ENCODE measurements at regions of chr11 and their contacts with region 1.

Region 1: DNA sequence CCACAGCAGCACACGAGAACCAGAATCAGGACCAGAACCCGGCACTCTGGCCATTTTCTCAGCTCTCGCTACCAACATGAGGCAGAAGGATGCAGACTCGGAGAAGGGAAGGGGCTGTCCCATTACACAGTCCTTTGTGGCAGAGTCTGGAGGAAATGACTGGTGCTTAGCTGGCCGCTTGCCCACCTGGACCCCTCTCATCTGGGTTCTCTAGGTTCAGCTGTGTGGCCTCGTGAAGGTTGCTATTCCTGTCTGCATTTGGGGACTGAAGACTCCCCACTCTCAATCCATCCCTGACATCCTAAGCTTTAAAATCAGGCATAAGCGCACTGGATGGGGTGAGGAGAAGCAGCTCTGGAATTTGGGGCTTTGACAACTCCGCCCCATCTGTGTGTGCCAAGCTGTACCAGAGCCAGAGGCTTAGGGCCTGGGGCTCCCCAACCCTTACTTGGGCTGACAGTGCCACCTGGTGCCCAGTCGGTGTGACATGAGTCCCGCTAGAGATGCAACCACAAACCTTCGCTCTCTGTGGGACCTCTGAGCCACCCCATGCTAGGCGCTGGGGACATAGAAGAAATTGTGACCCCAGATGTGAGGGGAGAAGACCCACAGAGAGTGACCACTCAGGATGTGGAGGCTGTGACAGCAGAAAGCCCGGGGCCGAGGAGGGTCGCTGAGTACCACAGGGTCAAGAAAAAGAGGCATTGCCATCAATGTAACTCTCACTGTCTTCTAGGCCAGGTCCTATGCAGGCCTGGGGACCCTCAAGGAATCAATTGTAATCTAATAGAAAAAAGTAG is 35.9 kb upstream of the FCHSD2 start:
- DNase-seq: peak; percentile 72
- ATAC-seq: peak; percentile 94
- H3K4me3 Mint-ChIP-seq: no peak overlapping the region
- H3K27ac Mint-ChIP-seq: peak overlapping the region; percentile 87
- H3K4me1 Mint-ChIP-seq: peaks cover 42% of the 10 kb centered on the region
- H3K27me3 Mint-ChIP-seq: no peaks in the 10 kb centered on the region
- CTCF ChIP-seq: peak; percentile 43

Region 2: GRCh38 chr11:72831513-72832300 is 346.3 kb before region 1 on chr11:
- CTCF ChIA-PET with region 1: interaction called, 75 read pairs
- POLR2A ChIA-PET with region 1: interaction called, 6 read pairs
- intact Hi-C with region 1: loop called (anchors 1 kb)
- DNase-seq: no peak
- ATAC-seq: peak; percentile 65
- H3K4me3 Mint-ChIP-seq: no peak overlapping the region
- H3K27ac Mint-ChIP-seq: peak overlapping the region; percentile 80
- H3K4me1 Mint-ChIP-seq: peaks cover 24% of the 10 kb centered on the region
- H3K27me3 Mint-ChIP-seq: no peaks in the 10 kb centered on the region
- CTCF ChIP-seq: peak; percentile 30

Region 3: DNA sequence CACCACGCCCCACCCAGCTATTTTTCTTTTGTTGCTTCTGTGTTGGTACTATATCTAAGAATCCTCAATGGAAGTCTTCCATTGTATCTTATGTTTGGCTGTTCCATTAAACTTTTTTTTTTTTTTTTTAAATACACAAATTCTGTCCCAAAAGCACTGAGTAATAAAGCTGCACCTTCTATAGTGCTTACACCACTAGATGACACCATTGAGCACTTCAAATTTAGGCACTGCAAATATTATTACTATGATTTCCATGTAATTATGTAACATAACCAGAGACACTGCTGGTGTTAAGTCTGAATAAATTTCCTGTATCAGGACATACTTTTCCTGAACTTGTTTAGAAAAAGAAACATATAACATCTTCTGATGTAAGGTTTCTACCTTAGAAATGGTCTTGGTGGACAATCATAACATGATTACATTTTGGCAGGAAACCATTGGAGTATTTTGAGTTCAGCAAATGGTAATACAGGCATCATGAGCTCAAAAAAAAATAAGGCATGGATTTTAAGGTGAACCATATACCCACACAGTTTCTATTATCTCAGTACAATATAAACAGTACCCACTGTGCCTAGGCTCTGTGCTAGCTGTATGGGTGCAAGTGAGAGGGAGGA is 253.3 kb before region 1 on chr11:
- CTCF ChIA-PET with region 1: interaction called, 130 read pairs
- POLR2A ChIA-PET with region 1: interaction called, 5 read pairs
- intact Hi-C with region 1: loop called (anchors 1 kb)
- DNase-seq: no peak
- ATAC-seq: peak; percentile 54
- H3K4me3 Mint-ChIP-seq: no peak overlapping the region
- H3K27ac Mint-ChIP-seq: peak overlapping the region; percentile 71
- H3K4me1 Mint-ChIP-seq: peaks cover 32% of the 10 kb centered on the region
- H3K27me3 Mint-ChIP-seq: no peaks in the 10 kb centered on the region
- CTCF ChIP-seq: no peak

Region 4: GRCh38 chr11:73085189-73085875 is 92.6 kb before region 1 on chr11:
- CTCF ChIA-PET with region 1: interaction called, 3 read pairs
- POLR2A ChIA-PET with region 1: no interaction called
- intact Hi-C with region 1: loop called (anchors 5 kb)
- DNase-seq: no peak
- ATAC-seq: no peak
- H3K4me3 Mint-ChIP-seq: peak overlapping the region; percentile 48
- H3K27ac Mint-ChIP-seq: peak overlapping the region; percentile 83
- H3K4me1 Mint-ChIP-seq: peaks cover 49% of the 10 kb centered on the region
- H3K27me3 Mint-ChIP-seq: no peaks in the 10 kb centered on the region
- CTCF ChIP-seq: no peak

Region 5: GRCh38 chr11:73157053-73158010 is 20.6 kb before region 1 on chr11:
- CTCF ChIA-PET with region 1: interaction called, 57 read pairs
- POLR2A ChIA-PET with region 1: interaction called, 56 read pairs
- intact Hi-C with region 1: loop called (anchors 1 kb)
- DNase-seq: peak; percentile 51
- ATAC-seq: peak; percentile 51
- H3K4me3 Mint-ChIP-seq: peak overlapping the region; percentile 78
- H3K27ac Mint-ChIP-seq: peak overlapping the region; percentile 97
- H3K4me1 Mint-ChIP-seq: peaks cover 95% of the 10 kb centered on the region
- H3K27me3 Mint-ChIP-seq: no peaks in the 10 kb centered on the region
- CTCF ChIP-seq: no peak

Region 6: GRCh38 chr11:73242251-73243079 is 64.5 kb after region 1 on chr11:
- CTCF ChIA-PET with region 1: interaction called, 87 read pairs
- POLR2A ChIA-PET with region 1: no interaction called
- intact Hi-C with region 1: no loop called
- DNase-seq: peak; percentile 65
- ATAC-seq: peak; percentile 95
- H3K4me3 Mint-ChIP-seq: no peak overlapping the region
- H3K27ac Mint-ChIP-seq: no peak overlapping the region
- H3K4me1 Mint-ChIP-seq: peaks cover 4% of the 10 kb centered on the region
- H3K27me3 Mint-ChIP-seq: peaks cover 5% of the 10 kb centered on the region
- CTCF ChIP-seq: peak; percentile 47

Measured in activated B cell treated with CpG ODN at 0.5 μM for 24 hours (primary cell).